ENCODE measurements at regions of chr4 and their contacts with region 1.

Region 1: GRCh38 chr4:37603070-37603468 is 83.1 kb downstream of the RELL1 start:
- DNase-seq: peak; percentile 86
- ATAC-seq: peak; percentile 63
- H3K4me3 Mint-ChIP-seq: no peak overlapping the region
- H3K27ac Mint-ChIP-seq: peak overlapping the region; percentile 53
- H3K4me1 Mint-ChIP-seq: peaks cover 4% of the 10 kb centered on the region
- H3K27me3 Mint-ChIP-seq: no peaks in the 10 kb centered on the region

Region 2: DNA sequence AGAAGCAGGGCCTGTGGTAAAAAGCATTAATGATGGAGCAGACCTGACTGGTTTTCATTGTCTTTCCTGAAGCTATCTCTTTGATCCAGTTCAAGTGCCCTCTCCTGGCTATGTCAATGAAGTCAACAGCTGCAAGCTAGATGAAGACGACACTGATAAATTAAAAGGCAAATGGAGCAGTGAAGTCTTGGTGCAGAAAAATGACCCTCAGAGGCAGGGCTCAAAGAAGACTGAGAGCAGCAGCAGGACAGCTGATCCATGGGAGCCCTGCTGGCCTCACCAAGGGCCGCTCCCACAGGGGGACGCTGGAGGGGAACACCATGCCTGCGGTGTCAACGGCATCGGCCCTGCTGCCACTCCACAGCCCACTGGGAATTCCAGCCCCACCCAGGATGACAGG is 13.1 kb before region 1 on chr4:
- CTCF ChIA-PET with region 1: interaction called, 10 read pairs
- POLR2A ChIA-PET with region 1: no interaction called
- intact Hi-C with region 1: no loop called
- DNase-seq: no peak
- ATAC-seq: no peak
- H3K4me3 Mint-ChIP-seq: no peak overlapping the region
- H3K27ac Mint-ChIP-seq: no peak overlapping the region
- H3K4me1 Mint-ChIP-seq: no peaks in the 10 kb centered on the region
- H3K27me3 Mint-ChIP-seq: peaks cover 2% of the 10 kb centered on the region

Region 3: DNA sequence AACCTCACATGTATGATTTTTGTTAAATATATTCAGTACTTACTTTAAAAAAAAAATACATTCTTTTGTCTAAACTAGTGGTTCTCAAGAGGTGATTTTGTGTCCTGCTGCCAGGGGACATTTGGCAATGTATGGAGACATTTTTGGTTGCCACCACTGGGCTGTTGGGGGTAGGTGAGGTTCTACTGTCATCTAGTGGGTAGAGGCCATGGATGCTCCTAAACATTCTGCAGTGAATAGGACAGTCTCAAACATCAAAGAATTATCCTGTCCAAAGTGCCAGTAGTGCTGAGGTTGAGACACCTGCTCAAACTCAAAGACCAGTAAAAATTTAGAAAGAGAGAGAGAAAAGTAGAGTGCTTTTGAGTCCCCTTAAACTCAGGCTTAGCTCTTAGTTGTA is 190.5 kb after region 1 on chr4:
- CTCF ChIA-PET with region 1: interaction called, 7 read pairs
- POLR2A ChIA-PET with region 1: no interaction called
- intact Hi-C with region 1: loop called (anchors 1 to 5 kb)
- DNase-seq: peak; percentile 23
- ATAC-seq: peak; percentile 64
- H3K4me3 Mint-ChIP-seq: no peak overlapping the region
- H3K27ac Mint-ChIP-seq: no peak overlapping the region
- H3K4me1 Mint-ChIP-seq: peaks cover under 1% of the 10 kb centered on the region
- H3K27me3 Mint-ChIP-seq: no peaks in the 10 kb centered on the region

Region 4: GRCh38 chr4:37802068-37802666 is 199.1 kb after region 1 on chr4:
- CTCF ChIA-PET with region 1: interaction called, 18 read pairs
- POLR2A ChIA-PET with region 1: no interaction called
- intact Hi-C with region 1: loop called in 1 of 2 experiments (anchors 1 kb)
- DNase-seq: peak; percentile 48
- ATAC-seq: no peak
- H3K4me3 Mint-ChIP-seq: no peak overlapping the region
- H3K27ac Mint-ChIP-seq: no peak overlapping the region
- H3K4me1 Mint-ChIP-seq: no peaks in the 10 kb centered on the region
- H3K27me3 Mint-ChIP-seq: peaks cover 4% of the 10 kb centered on the region

Region 5: DNA sequence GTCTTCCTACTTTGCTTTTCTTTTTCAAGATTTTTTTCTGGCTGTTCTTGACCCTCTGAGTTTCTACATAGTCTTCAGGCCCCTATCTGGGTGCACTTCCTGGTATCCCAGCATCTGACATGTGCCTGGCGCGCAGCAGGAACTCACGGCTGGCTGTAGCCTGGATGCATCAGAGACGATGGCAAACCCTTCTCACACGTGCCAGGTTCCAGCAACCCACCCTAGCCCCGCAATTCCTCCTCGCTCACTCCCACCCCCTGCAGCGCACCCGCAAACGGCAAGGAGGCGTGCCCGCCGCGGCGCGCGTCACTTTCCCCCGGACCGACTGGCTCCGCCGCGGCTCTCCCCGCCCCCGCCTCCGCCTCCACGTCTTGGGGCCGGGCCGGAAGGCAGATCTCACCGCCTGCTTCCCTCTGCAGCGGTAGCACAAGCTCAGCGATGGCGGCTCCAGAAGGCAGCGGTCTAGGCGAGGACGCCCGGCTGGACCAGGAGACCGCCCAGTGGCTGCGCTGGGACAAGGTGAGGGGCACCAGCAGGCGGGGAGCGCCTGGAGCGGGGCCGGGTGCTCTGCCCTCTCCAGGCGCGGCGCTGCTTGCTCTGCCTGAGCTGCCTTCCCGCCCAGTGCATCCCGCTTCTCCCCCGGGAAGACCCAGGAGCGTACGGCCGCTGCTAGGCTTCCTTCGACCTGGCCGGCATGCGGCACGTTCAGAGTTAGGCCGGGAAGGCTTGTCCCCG is 223.4 kb after region 1 on chr4 and contains the start of gene PGM2:
- CTCF ChIA-PET with region 1: interaction called, 4 read pairs
- POLR2A ChIA-PET with region 1: no interaction called
- intact Hi-C with region 1: loop called in 1 of 2 experiments (anchors 1 kb)
- DNase-seq: peak; percentile 95
- ATAC-seq: peak; percentile 96
- H3K4me3 Mint-ChIP-seq: peak within 1 kb of the TSS; percentile 97
- H3K27ac Mint-ChIP-seq: peak within 1 kb of the TSS; percentile 93
- H3K4me1 Mint-ChIP-seq: peaks cover 29% of the 10 kb centered on the region
- H3K27me3 Mint-ChIP-seq: no peaks in the 10 kb centered on the region
- total RNA-seq, gene PGM2: 54.1 to 60.1 TPM

Region 6: GRCh38 chr4:37891260-37892159 is 288.4 kb after region 1 on chr4:
- CTCF ChIA-PET with region 1: no interaction called
- POLR2A ChIA-PET with region 1: no interaction called
- intact Hi-C with region 1: loop called in 1 of 2 experiments (anchors 5 kb)
- DNase-seq: peak; percentile 73
- ATAC-seq: peak; percentile 78
- H3K4me3 Mint-ChIP-seq: peak overlapping the region; percentile 78
- H3K27ac Mint-ChIP-seq: peak overlapping the region; percentile 93
- H3K4me1 Mint-ChIP-seq: peaks cover 35% of the 10 kb centered on the region
- H3K27me3 Mint-ChIP-seq: peaks cover 3% of the 10 kb centered on the region

Region 7: GRCh38 chr4:38034986-38035882 is 432.2 kb after region 1 on chr4:
- CTCF ChIA-PET with region 1: interaction called, 11 read pairs
- POLR2A ChIA-PET with region 1: no interaction called
- intact Hi-C with region 1: loop called (anchors 1 to 10 kb)
- DNase-seq: peak; percentile 42
- ATAC-seq: no peak
- H3K4me3 Mint-ChIP-seq: no peak overlapping the region
- H3K27ac Mint-ChIP-seq: no peak overlapping the region
- H3K4me1 Mint-ChIP-seq: no peaks in the 10 kb centered on the region
- H3K27me3 Mint-ChIP-seq: no peaks in the 10 kb centered on the region